ENCODE measurements at regions of chr6 and their contacts with region 1.

Region 1: DNA sequence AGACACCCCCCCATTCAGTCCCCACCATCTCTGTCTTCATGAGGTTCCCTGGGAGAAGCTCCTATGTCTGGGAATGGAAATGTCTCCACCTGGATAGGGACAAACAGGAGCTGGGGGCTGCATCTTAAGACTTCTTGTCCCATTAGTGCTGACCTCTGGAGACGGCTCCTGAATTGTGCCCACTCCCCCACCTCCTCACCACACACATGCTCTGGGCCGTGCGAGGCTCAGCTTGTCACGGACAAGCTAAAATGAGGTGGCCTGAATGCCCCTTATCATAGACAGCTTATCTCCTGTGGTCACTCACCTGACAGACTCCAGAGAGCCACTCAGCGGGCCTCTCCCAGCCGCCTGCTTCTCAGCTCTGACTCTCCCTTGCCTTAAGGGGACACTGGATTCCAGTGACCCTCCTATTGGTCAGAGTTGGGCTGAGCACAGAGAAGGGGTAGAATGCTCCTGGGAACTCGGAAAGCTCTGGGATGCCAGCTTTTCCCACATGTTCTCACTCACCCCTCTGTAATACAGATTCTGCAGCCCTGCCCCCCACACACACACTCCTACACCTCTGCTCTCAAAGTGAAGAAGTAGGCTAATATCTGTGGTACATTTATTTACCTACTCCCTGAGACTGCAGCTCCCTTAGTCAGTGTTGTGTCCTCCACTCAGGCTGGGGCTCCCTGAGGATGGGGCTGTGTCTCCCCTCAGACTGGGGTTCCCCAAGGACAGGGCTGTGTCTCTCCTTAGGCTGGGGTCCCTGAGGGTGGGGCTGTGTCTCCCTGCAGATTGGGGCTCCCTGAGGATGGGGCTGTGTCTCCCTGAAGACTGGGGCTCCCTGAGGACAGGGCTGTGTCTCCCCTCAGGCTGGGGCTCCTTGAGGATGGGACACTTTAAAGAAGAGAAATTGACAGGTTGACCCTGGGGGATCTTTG is 167.5 kb downstream of the VEGFA start:
- DNase-seq: peak in 2 of 5 donors; percentile 44 to 47
- H3K4me3 ChIP-seq: no peak overlapping the region
- H3K27ac ChIP-seq: no peak overlapping the region
- H3K4me1 ChIP-seq: no peaks in the 10 kb centered on the region
- H3K27me3 ChIP-seq: no peaks in the 10 kb centered on the region
- CTCF ChIP-seq: no peak

Region 2: GRCh38 chr6:43779852-43780236 is 157.7 kb before region 1 on chr6:
- intact Hi-C with region 1: loop called (anchors 10 kb)
- DNase-seq: peak in 4 of 5 donors; percentile 60 to 94 (median 73)
- H3K4me3 ChIP-seq: no peak overlapping the region
- H3K27ac ChIP-seq: peak overlapping the region; percentile 48 to 60
- H3K4me1 ChIP-seq: peaks cover 0 to 39% (median 34%) of the 10 kb centered on the region in 3 donors
- H3K27me3 ChIP-seq: no peaks in the 10 kb centered on the region
- CTCF ChIP-seq: no peak

Region 3: DNA sequence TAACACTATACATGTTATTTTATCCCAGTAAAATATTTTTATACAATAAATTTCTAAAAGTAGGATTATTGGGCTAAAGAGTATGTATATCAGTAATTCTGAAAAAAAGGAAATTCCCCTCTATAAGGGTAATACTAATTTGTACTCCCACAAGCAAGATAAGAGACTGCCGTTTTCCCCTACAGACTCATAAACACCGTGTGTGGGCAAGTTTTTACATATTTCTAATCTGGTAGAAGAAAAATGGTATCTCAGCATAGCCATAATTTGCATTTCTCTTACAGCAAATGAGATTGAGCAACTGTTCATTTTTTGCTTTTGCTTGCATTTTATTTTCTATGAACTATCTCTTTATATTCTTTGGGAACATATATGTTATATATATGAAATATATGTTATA is 253.2 kb after region 1 on chr6:
- intact Hi-C with region 1: no loop called
- DNase-seq: no peak
- H3K4me3 ChIP-seq: no peak overlapping the region
- H3K27ac ChIP-seq: no peak overlapping the region
- H3K4me1 ChIP-seq: no peaks in the 10 kb centered on the region
- H3K27me3 ChIP-seq: no peaks in the 10 kb centered on the region
- CTCF ChIP-seq: no peak

Measured in kidney (tissue), 22 donors.